Activated T-helper 2 cell treated with anti-CD3 and anti-CD28 coated beads, Interferon-gamma antibody, Interleukin-2, Interleukin-4, amounts not matched to agents 10 μg/mL and 5 μg/mL and 100 μg/mL, durations not matched to agents 14 hours and 24 hours and 36 hours (primary cell): ENCODE measurements at regions of chr4 and their contacts with region 1.

Region 1: GRCh38 chr4:48681856-48682255 is 98.2 kb downstream of the FRYL start:
- DNase-seq: no peak
- H3K4me3 Mint-ChIP-seq: no peak overlapping the region
- H3K27ac Mint-ChIP-seq: peak overlapping the region; percentile 55
- H3K4me1 Mint-ChIP-seq: peaks cover 24% of the 10 kb centered on the region
- H3K27me3 Mint-ChIP-seq: no peaks in the 10 kb centered on the region

Region 2: GRCh38 chr4:48578132-48578968 is 103.5 kb before region 1 on chr4:
- intact Hi-C with region 1: loop called (anchors 1 kb)
- DNase-seq: peak; percentile 14
- H3K4me3 Mint-ChIP-seq: no peak overlapping the region
- H3K27ac Mint-ChIP-seq: no peak overlapping the region
- H3K4me1 Mint-ChIP-seq: no peaks in the 10 kb centered on the region
- H3K27me3 Mint-ChIP-seq: no peaks in the 10 kb centered on the region

Region 3: DNA sequence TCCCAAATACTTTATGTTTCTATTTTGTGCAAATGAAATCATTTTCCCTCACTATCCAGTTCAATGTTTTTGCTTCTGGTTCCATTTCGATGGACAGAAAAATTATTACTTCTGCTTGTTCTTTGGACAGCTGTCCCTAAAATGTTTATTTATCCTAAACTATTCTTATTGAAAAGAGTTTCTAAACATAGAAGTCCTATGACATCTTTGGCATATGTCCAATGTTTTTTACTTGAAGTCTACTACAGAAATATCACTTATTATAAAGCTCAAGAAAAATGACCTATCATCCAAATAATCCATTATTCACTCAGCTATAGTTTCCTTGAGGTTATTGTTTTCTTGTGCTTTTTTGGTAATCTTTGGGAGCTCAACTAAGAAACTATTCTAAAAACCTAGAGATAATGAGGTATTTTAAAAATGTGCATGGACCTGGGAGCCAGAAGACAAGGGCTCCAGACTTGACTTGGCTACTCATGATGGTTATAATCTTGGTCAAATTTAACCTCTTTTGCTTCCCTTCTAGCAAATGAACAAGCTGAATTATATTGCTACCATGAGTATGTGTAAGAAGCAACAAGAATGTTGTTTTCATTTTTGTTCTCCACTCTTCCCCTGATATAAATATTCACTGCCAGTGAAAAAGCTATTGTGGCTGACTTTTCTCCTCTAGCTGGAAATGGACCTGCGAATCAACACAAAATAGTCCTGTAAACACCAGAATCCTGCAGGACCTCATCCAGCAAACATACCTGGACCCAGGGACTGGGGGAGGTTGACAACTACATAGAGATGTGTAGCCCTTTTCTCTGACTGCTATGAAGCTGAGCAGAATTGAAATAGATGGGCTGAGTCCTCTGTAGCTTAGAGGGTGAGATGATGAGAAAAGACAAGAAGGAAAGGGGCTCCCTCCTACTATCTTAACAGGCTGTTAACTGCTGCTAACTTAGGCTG is 39.2 kb before region 1 on chr4:
- intact Hi-C with region 1: no loop called
- DNase-seq: no peak
- H3K4me3 Mint-ChIP-seq: no peak overlapping the region
- H3K27ac Mint-ChIP-seq: no peak overlapping the region
- H3K4me1 Mint-ChIP-seq: peaks cover 9% of the 10 kb centered on the region
- H3K27me3 Mint-ChIP-seq: no peaks in the 10 kb centered on the region

Region 4: DNA sequence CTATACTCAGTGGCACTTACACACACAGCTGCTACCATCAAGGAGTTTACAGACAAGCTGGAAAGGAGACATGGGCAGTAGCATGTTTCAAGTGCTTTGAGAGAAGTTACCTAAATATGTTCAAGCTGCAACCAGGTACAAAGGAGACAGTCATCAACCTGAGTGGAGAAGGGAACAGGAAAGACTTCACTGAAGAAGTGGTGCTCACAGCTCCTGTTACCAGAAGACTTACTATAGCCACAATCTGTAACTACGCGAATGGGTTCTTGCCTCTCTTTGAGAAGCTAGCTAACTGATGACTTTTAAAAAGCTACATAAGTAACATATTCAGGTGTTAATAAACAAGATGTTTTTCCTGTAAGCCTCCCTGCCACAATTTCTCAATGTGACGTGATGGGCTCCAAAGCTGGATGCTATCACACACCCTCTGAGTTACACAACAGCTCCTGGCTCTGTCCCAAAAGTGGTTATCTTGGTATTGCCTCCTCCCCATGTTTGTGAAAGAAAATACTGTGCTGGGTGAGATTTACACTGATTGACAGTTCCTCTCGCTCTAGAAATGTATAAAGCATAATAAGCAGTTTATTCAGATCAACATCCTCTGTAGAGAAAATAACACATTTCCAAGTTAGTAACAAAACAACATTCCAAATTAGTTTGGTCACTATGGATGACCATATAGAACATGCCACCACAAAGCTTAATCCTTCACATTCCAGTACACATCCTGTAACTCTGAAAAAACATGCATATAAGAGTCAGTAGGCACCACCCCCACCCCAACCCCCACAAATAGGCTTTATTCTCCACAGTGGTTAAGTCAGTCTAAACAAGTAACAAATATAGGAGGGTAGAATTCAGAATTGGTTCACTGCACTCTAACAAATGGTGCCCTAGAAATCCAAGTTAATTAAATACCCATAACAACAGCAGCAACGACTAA is 16.4 kb after region 1 on chr4:
- intact Hi-C with region 1: loop called (anchors 2 kb)
- DNase-seq: no peak
- H3K4me3 Mint-ChIP-seq: no peak overlapping the region
- H3K27ac Mint-ChIP-seq: no peak overlapping the region
- H3K4me1 Mint-ChIP-seq: peaks cover 29% of the 10 kb centered on the region
- H3K27me3 Mint-ChIP-seq: no peaks in the 10 kb centered on the region

Region 5: DNA sequence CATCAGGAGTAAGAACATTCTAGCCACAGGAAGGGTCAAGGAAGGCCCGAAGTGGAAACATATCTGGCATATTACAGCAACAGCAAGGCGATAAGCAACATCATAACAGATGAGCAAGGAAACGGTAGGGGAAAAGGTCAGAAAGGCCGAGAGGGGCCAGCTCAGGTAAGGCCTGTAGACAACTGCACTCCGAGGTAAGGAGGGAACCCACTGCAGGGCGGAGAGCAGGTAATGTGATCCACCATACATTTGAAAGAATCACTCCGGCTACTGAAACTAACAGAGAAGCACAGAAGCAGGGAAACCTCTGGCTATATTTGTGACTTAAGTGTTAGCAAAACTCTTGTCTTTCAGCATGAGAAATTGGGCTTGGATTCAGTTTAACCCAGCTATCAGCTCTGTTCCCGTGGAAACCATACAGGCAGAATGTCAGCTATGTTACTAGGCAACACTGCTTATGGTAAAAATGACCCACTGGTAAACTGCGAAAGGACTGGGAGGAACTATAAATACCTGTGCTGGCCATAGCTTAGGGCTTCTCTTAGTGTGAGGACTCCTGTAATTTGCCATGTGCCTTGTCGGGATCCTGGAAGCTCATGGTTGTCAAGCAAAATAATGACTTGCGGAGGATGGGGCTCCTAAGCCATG is 67.2 kb after region 1 on chr4:
- intact Hi-C with region 1: no loop called
- DNase-seq: no peak
- H3K4me3 Mint-ChIP-seq: no peak overlapping the region
- H3K27ac Mint-ChIP-seq: no peak overlapping the region
- H3K4me1 Mint-ChIP-seq: peaks cover 41% of the 10 kb centered on the region
- H3K27me3 Mint-ChIP-seq: no peaks in the 10 kb centered on the region